Right ventricle myocardium superior (tissue), 1 donor: ENCODE measurements at regions of chr3 and their contacts with region 1.

Region 1: DNA sequence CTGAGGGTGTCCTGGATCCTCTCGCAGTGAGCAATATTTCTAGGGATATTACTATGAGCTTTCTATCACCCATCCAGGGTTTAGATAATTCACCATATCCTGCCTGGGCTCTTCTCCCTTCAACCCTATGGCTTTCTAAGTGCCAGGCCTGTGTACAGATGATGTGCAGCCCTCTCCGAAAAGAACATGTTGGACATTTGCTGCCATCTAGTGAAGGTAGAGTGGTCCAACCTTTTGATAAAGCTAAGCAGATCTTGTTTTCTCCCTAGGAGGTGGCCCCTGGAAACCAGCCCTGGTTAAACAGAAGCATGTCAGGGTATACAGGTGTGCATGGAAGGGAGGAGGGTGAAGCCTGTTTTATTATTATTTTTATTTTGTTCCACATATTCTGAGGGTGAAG is 27.9 kb upstream of the SCN10A start:
- DNase-seq: no peak
- ATAC-seq: peak; percentile 92

Region 2: GRCh38 chr3:38496131-38496910 is 347.6 kb before region 1 on chr3 and contains the start of gene EXOG:
- intact Hi-C with region 1: loop called (anchors 10 kb)
- DNase-seq: peak; percentile 94
- ATAC-seq: peak; percentile 93
- total RNA-seq, gene EXOG: 23.2 TPM

Region 3: GRCh38 chr3:38521391-38521987 is 322.4 kb before region 1 on chr3:
- intact Hi-C with region 1: loop called (anchors 10 kb)
- DNase-seq: no peak
- ATAC-seq: peak; percentile 76

Region 4: DNA sequence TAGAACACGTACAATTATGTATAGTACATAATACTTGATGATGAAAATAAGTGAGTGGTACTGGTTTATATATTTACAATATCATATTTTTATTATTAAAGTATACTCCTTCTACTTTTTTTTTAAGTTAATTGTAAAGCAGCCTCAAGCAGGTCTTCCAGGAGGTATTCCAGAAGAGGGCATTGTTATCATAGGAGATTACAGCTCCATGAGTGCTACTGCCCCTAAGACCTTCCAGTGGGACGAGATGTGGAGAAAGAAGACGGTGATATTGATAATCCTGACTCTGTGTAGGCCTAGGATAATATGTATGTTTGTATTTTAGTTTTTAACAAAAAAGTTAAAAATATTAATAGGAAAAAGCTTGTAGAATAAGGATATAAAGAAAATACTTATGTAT is 154.1 kb before region 1 on chr3:
- intact Hi-C with region 1: loop called (anchors 5 kb)
- DNase-seq: no peak
- ATAC-seq: peak; percentile 74